ENCODE measurements at regions of chr14 and their contacts with region 1.

Region 1: DNA sequence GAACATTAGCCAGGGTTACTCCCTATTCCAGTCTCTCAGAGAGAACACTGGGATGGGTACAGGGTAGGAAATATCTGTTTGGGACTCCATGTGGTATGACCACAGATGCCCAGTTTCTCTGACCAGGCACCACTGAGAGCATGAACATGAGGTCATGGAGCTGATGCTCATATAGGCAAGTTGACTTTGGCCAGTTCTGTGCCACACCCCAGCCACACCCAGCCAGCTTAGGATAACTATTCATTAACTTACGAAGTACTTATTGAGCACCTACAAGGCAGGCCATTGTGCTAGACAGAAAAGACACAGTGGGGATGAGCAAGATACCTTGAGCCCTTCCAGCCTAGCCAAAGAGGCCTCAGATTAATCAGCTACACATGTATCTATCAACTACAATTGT is 262.5 kb downstream of the DPF3 start:
- DNase-seq: no peak
- H3K4me3 ChIP-seq: no peak overlapping the region
- H3K27ac ChIP-seq: no peak overlapping the region
- H3K4me1 ChIP-seq: no peaks in the 10 kb centered on the region
- H3K27me3 ChIP-seq: no peaks in the 10 kb centered on the region
- CTCF ChIP-seq: no peak
- POLR2A ChIP-seq: no peak

Region 2: GRCh38 chr14:73014105-73014504 is 382.7 kb after region 1 on chr14:
- CTCF ChIA-PET with region 1: no interaction called
- POLR2A ChIA-PET with region 1: interaction called, 10 read pairs
- dilution Hi-C with region 1: no loop called
- intact Hi-C with region 1: no loop called
- DNase-seq: no peak
- H3K4me3 ChIP-seq: no peak overlapping the region
- H3K27ac ChIP-seq: no peak overlapping the region
- H3K4me1 ChIP-seq: no peaks in the 10 kb centered on the region
- H3K27me3 ChIP-seq: no peaks in the 10 kb centered on the region
- CTCF ChIP-seq: no peak
- POLR2A ChIP-seq: no peak

Measured in endothelial cell of umbilical vein (primary cell).